GM12878 (cell line): ENCODE measurements at regions of chr14 and their contacts with region 1.

Region 1: DNA sequence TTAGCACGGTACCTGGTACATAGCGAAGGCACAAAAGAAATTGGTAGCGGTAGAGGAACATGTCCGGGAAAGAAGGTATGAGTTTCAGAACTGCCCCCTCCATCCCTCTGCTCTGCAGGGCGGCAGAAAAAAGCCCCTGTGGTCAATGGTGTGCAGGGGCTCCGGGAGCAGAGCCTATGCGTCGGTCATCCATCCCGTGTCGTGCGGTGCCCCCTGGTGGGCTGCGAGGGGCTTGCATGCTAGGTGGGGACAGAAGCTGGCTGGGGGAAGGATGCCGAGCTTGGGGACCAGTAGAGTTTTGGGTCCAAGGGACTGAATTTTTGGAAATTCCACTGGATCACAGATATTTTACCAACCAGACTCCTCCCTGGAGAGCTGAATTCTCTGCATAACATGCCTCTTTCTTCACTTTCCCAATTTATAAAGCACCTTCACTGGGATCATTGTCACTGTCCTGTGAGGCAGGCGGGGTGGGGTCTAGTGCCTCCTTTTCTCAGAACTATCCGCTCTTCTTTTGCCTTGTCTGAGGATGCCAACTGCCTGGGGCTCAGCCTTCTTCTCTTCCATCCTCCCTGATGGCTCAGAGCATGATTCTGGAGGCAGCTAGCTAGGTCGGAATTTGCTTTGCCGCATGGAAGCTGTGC is 148.7 kb downstream of the SMOC1 start:
- DNase-seq: no peak
- ATAC-seq: peak; percentile 96
- H3K4me3 ChIP-seq: no peak overlapping the region
- H3K27ac ChIP-seq: no peak overlapping the region
- H3K4me1 ChIP-seq: no peaks in the 10 kb centered on the region
- H3K27me3 ChIP-seq: no peaks in the 10 kb centered on the region; a peak in 1 of 4 replicates
- CTCF ChIP-seq: peak; percentile 92 to 95 (median 94)
- EP300 ChIP-seq: no peak
- POLR2A ChIP-seq: no peak
- RAD21 ChIP-seq: peak; percentile 99

Region 2: DNA sequence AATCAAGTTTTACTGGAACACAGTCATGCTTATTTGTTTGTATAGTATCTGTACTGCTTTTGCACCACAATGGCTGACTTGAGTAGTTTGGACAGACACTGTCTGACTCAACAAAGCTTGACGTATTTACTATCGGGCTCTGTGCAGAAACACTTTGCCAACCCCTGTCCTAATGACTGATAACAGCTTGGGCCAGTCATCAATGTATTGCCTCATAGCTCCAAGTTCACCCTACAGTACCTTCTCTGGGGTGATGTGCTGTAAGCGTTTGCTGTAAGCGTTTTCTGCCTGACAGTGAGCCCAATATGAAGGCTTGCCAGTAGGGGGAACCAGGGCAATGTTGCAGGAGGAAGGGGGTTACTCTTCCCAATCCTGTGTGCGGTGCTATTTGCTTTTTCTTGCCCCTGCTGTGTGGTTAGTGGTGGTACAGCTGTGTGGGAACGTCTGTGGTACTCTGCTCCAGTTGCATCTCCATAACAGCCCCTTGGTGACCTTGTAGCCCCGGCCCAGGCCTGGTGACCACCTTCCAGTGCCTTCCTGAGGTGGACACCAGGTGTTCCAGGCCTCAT is 447.8 kb before region 1 on chr14:
- CTCF ChIA-PET with region 1: no interaction called
- POLR2A ChIA-PET with region 1: no interaction called
- RAD21 ChIA-PET with region 1: no interaction called
- SMC1A ChIA-PET with region 1: interaction called, 4 read pairs
- in situ Hi-C with region 1: loop called (anchors 10 kb)
- intact Hi-C with region 1: loop called (anchors 5 kb)
- DNase-seq: no peak
- ATAC-seq: peak; percentile 74
- H3K4me3 ChIP-seq: no peak overlapping the region
- H3K27ac ChIP-seq: no peak overlapping the region
- H3K4me1 ChIP-seq: no peaks in the 10 kb centered on the region
- H3K27me3 ChIP-seq: peaks cover 0 to 1% of the 10 kb centered on the region in 2 experiments; a peak in 1 of 4 replicates
- CTCF ChIP-seq: peak; percentile 43 to 53 (median 47)
- EP300 ChIP-seq: no peak
- POLR2A ChIP-seq: no peak
- RAD21 ChIP-seq: peak; percentile 39

Region 3: GRCh38 chr14:69586404-69586803 is 441.5 kb before region 1 on chr14:
- CTCF ChIA-PET with region 1: no interaction called
- POLR2A ChIA-PET with region 1: no interaction called
- RAD21 ChIA-PET with region 1: no interaction called
- SMC1A ChIA-PET with region 1: interaction called, 4 read pairs
- in situ Hi-C with region 1: loop called (anchors 10 kb)
- intact Hi-C with region 1: loop called (anchors 5 kb)
- DNase-seq: no peak
- ATAC-seq: no peak
- H3K4me3 ChIP-seq: no peak overlapping the region
- H3K27ac ChIP-seq: no peak overlapping the region
- H3K4me1 ChIP-seq: no peaks in the 10 kb centered on the region
- H3K27me3 ChIP-seq: no peaks in the 10 kb centered on the region
- CTCF ChIP-seq: no peak
- EP300 ChIP-seq: no peak
- POLR2A ChIP-seq: no peak
- RAD21 ChIP-seq: no peak

Region 4: DNA sequence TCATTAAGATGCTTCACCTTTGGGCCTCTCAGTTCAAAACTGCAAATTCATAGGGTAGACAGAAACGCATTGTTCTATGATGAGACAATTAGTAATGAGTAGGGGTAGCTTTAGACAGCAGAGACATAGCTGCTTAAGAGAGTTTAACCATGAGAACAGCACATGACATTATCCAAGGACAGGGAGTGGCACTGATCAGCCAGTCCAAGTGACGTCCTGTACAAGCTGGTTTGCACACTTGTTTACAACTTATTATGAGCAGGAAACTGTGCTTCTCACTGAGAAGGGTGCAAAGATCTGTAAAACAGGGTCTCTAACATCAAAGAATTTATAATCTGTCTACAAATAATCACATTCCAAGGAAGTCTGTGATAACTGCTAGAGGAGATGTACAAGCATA is 272.1 kb before region 1 on chr14:
- CTCF ChIA-PET with region 1: no interaction called
- POLR2A ChIA-PET with region 1: no interaction called
- RAD21 ChIA-PET with region 1: no interaction called
- SMC1A ChIA-PET with region 1: no interaction called
- in situ Hi-C with region 1: no loop called
- intact Hi-C with region 1: no loop called
- DNase-seq: no peak
- ATAC-seq: no peak
- H3K4me3 ChIP-seq: no peak overlapping the region
- H3K27ac ChIP-seq: no peak overlapping the region
- H3K4me1 ChIP-seq: no peaks in the 10 kb centered on the region
- H3K27me3 ChIP-seq: no peaks in the 10 kb centered on the region; a peak in 1 of 4 replicates
- CTCF ChIP-seq: no peak
- EP300 ChIP-seq: no peak
- POLR2A ChIP-seq: no peak
- RAD21 ChIP-seq: no peak

Region 5: DNA sequence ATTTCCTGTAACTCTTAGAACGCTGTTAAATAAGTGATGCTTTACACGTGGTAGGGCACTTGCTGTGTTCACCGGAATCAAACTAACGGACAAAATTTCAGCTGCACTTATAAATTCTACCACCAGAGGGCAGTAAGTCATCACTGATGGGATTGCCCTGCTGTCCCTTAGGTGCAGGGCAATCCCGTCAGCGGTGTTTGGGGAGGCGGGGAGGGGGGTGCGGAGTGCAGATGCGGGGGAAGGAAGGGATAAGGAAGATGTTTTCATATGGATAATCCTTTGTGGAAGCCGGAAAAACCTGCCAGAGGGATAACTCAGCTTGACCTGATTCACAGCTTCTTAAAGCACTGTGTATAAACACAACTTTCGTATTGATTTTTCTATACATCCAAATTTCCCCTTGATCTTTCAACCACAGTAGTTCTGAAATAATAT is 209.1 kb before region 1 on chr14:
- CTCF ChIA-PET with region 1: interaction called, 61 read pairs
- POLR2A ChIA-PET with region 1: no interaction called
- RAD21 ChIA-PET with region 1: interaction called, 28 read pairs
- SMC1A ChIA-PET with region 1: interaction called, 24 read pairs
- in situ Hi-C with region 1: loop called (anchors 5 kb)
- intact Hi-C with region 1: loop called (anchors 1 kb)
- DNase-seq: peak; percentile 55
- ATAC-seq: peak; percentile 95
- H3K4me3 ChIP-seq: no peak overlapping the region
- H3K27ac ChIP-seq: no peak overlapping the region
- H3K4me1 ChIP-seq: no peaks in the 10 kb centered on the region
- H3K27me3 ChIP-seq: no peaks in the 10 kb centered on the region; a peak in 1 of 4 replicates
- CTCF ChIP-seq: peak; percentile 71 to 79 (median 75)
- EP300 ChIP-seq: no peak
- POLR2A ChIP-seq: no peak
- RAD21 ChIP-seq: peak; percentile 99

Region 6: DNA sequence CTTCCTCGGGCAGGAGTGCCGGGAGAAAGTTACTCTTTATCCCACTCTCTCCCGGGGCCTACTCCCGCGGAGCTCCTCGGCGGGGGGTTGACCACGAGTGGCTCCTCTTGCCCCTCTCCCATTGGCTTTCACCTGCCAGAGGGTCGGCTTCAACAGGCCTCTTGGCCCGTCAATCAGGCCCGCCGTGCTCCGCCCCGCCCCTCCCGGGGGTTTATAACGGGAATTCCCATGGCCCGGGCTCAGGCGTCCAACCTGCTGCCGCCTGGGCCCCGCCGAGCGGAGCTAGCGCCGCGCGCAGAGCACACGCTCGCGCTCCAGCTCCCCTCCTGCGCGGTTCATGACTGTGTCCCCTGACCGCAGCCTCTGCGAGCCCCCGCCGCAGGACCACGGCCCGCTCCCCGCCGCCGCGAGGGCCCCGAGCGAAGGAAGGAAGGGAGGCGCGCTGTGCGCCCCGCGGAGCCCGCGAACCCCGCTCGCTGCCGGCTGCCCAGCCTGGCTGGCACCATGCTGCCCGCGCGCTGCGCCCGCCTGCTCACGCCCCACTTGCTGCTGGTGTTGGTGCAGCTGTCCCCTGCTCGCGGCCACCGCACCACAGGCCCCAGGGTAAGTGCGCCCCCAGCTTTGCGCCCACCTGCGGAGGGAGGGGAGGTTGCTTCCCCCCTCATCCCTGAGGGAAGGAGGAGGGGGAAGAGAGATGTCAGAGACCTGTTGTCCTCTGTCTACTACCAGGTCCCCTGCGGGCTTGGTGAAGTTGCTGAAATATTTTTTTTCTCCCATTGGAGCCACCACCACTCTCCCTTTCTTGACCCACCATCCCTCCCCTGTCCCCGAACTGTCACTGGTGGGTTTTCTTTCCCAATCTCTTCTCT is 148.5 kb before region 1 on chr14 and contains the start of gene SMOC1:
- CTCF ChIA-PET with region 1: interaction called, 43 read pairs
- POLR2A ChIA-PET with region 1: no interaction called
- RAD21 ChIA-PET with region 1: interaction called, 11 read pairs
- SMC1A ChIA-PET with region 1: interaction called, 13 read pairs
- in situ Hi-C with region 1: no loop called
- intact Hi-C with region 1: loop called (anchors 1 kb)
- DNase-seq: no peak
- ATAC-seq: peak; percentile 64
- H3K4me3 ChIP-seq: no peak within 1 kb of the TSS
- H3K27ac ChIP-seq: no peak within 1 kb of the TSS
- H3K4me1 ChIP-seq: no peaks in the 10 kb centered on the region
- H3K27me3 ChIP-seq: peaks cover 8 to 10% of the 10 kb centered on the region in 2 experiments
- CTCF ChIP-seq: no peak
- EP300 ChIP-seq: no peak
- POLR2A ChIP-seq: no peak
- RAD21 ChIP-seq: no peak
- polyA plus RNA-seq, gene SMOC1: not detected

Region 7: DNA sequence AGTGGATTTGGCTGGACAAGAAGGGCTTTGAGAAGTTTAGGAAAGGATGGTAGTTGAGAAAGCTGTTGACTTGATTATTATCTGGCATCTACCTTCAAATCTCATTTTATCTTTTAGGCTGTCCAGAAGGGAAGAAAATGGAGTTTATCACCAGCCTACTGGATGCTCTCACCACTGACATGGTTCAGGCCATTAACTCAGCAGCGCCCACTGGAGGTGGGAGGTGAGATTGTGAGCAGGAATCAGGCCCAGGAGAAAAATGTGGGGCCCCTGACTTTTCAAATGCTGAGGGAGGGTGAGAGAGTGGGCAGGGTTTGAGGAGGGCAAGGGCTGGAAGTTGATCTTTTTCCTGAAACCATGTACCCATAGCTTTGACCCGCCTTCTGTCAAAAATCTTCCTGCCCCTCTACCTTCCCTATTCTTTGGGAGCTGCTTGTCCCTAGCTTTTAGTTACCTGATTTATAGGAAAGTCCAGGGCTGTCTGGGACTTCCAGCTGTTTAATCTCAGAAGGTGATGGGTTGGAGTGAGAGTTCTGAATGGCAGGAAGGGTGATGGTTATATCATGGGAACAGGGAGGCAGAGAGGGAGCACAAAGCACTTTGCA is 14.5 kb before region 1 on chr14:
- CTCF ChIA-PET with region 1: interaction called, 22 read pairs
- POLR2A ChIA-PET with region 1: no interaction called
- RAD21 ChIA-PET with region 1: interaction called, 5 read pairs
- SMC1A ChIA-PET with region 1: interaction called, 7 read pairs
- in situ Hi-C with region 1: no loop called
- intact Hi-C with region 1: no loop called
- DNase-seq: no peak
- ATAC-seq: peak; percentile 78
- H3K4me3 ChIP-seq: no peak overlapping the region
- H3K27ac ChIP-seq: no peak overlapping the region
- H3K4me1 ChIP-seq: peaks cover 27% of the 10 kb centered on the region
- H3K27me3 ChIP-seq: no peaks in the 10 kb centered on the region
- CTCF ChIP-seq: peak; percentile 50 to 90 (median 86)
- EP300 ChIP-seq: no peak
- POLR2A ChIP-seq: no peak
- RAD21 ChIP-seq: peak; percentile 59

Region 8: DNA sequence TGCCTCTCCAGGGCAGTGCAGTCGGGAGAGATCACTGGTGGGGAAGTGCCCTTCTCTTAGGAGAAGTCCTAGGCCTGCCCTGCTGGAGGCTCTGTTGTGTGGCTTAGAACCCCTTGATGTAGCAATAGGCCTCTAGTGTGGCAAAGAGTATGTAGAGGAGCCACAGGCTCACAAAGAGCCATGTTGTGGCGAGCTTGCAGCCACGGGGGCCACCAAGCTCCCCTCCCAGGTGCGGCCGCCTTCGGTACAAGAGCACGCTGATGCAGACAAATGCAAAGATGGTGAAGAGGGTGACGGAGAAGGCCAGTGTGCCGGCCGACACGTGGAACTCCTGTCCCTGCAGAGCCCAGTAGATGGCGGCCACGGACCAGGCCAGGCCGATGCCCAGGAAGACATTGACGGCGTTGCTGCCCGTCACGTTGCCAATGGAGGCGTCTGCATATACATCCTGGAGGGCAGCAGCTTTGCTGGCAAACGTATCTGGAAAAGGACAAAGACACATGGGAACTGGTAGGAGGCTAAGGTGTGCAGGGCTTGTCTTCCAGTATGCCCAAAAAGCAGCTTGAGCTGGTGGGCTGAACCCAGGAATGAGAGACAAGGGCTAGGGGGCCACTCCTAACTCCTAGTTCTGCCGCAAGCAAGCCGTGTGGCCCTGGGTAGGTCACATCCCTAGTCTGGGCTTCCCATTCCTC is 18.1 kb after region 1 on chr14:
- CTCF ChIA-PET with region 1: interaction called, 13 read pairs
- POLR2A ChIA-PET with region 1: no interaction called
- RAD21 ChIA-PET with region 1: interaction called, 5 read pairs
- SMC1A ChIA-PET with region 1: no interaction called
- in situ Hi-C with region 1: no loop called
- intact Hi-C with region 1: no loop called
- DNase-seq: no peak
- ATAC-seq: peak; percentile 85
- H3K4me3 ChIP-seq: no peak overlapping the region
- H3K27ac ChIP-seq: no peak overlapping the region
- H3K4me1 ChIP-seq: no peaks in the 10 kb centered on the region
- H3K27me3 ChIP-seq: no peaks in the 10 kb centered on the region
- CTCF ChIP-seq: peak; percentile 35 to 63 (median 40); a peak in 4 of 6 replicates
- EP300 ChIP-seq: no peak
- POLR2A ChIP-seq: no peak
- RAD21 ChIP-seq: peak; percentile 37

Region 9: GRCh38 chr14:70121521-70121920 is 93.6 kb after region 1 on chr14:
- CTCF ChIA-PET with region 1: no interaction called
- POLR2A ChIA-PET with region 1: no interaction called
- RAD21 ChIA-PET with region 1: no interaction called
- SMC1A ChIA-PET with region 1: no interaction called
- in situ Hi-C with region 1: no loop called
- intact Hi-C with region 1: no loop called
- DNase-seq: no peak
- ATAC-seq: no peak
- H3K4me3 ChIP-seq: no peak overlapping the region
- H3K27ac ChIP-seq: no peak overlapping the region
- H3K4me1 ChIP-seq: no peaks in the 10 kb centered on the region
- H3K27me3 ChIP-seq: 0 out of 4 replicates have a peak, but pooled peaks cover 0 to 3% of the 10 kb centered on the region in 2 experiments
- CTCF ChIP-seq: no peak
- EP300 ChIP-seq: no peak
- POLR2A ChIP-seq: no peak
- RAD21 ChIP-seq: no peak